ENCODE measurements at regions of chr22 and their contacts with region 1.

Region 1: GRCh38 chr22:39917776-39918495 is 17.1 kb downstream of the GRAP2 start:
- DNase-seq: no peak
- ATAC-seq: no peak
- H3K4me3 Mint-ChIP-seq: peak overlapping the region; percentile 80
- H3K27ac Mint-ChIP-seq: peak overlapping the region; percentile 92
- H3K4me1 Mint-ChIP-seq: peaks cover 79% of the 10 kb centered on the region
- H3K27me3 Mint-ChIP-seq: no peaks in the 10 kb centered on the region
- CTCF ChIP-seq: no peak

Region 2: GRCh38 chr22:39839917-39840510 is 77.9 kb before region 1 on chr22:
- CTCF ChIA-PET with region 1: no interaction called
- POLR2A ChIA-PET with region 1: no interaction called
- intact Hi-C with region 1: no loop called
- DNase-seq: peak; percentile 72
- ATAC-seq: peak; percentile 97
- H3K4me3 Mint-ChIP-seq: no peak overlapping the region
- H3K27ac Mint-ChIP-seq: peak overlapping the region; percentile 55
- H3K4me1 Mint-ChIP-seq: peaks cover 16% of the 10 kb centered on the region
- H3K27me3 Mint-ChIP-seq: no peaks in the 10 kb centered on the region
- CTCF ChIP-seq: no peak

Region 3: GRCh38 chr22:39900306-39901227 is 17.4 kb before region 1 on chr22 and contains the start of gene GRAP2:
- CTCF ChIA-PET with region 1: interaction called, 130 read pairs
- POLR2A ChIA-PET with region 1: interaction called, 270 read pairs
- intact Hi-C with region 1: no loop called
- DNase-seq: peak; percentile 83
- ATAC-seq: peak; percentile 89
- H3K4me3 Mint-ChIP-seq: peak within 1 kb of the TSS; percentile 80
- H3K27ac Mint-ChIP-seq: peak within 1 kb of the TSS; percentile 99
- H3K4me1 Mint-ChIP-seq: peaks cover 14% of the 10 kb centered on the region
- H3K27me3 Mint-ChIP-seq: no peaks in the 10 kb centered on the region
- CTCF ChIP-seq: no peak
- total RNA-seq, gene GRAP2: 83.2 to 86.8 TPM

Region 4: GRCh38 chr22:39932918-39933649 is 15.1 kb after region 1 on chr22:
- CTCF ChIA-PET with region 1: interaction called, 130 read pairs
- POLR2A ChIA-PET with region 1: interaction called, 270 read pairs
- intact Hi-C with region 1: no loop called
- DNase-seq: peak; percentile 81
- ATAC-seq: peak; percentile 67
- H3K4me3 Mint-ChIP-seq: peak overlapping the region; percentile 72
- H3K27ac Mint-ChIP-seq: peak overlapping the region; percentile 90
- H3K4me1 Mint-ChIP-seq: peaks cover 50% of the 10 kb centered on the region
- H3K27me3 Mint-ChIP-seq: no peaks in the 10 kb centered on the region
- CTCF ChIP-seq: peak; percentile 92

Region 5: GRCh38 chr22:39960791-39961746 is 43.1 kb after region 1 on chr22:
- CTCF ChIA-PET with region 1: interaction called, 3 read pairs
- POLR2A ChIA-PET with region 1: interaction called, 6 read pairs
- intact Hi-C with region 1: loop called (anchors 5 kb)
- DNase-seq: peak; percentile 94
- ATAC-seq: peak; percentile 95
- H3K4me3 Mint-ChIP-seq: peak overlapping the region; percentile 22
- H3K27ac Mint-ChIP-seq: peak overlapping the region; percentile 80
- H3K4me1 Mint-ChIP-seq: peaks cover 74% of the 10 kb centered on the region
- H3K27me3 Mint-ChIP-seq: no peaks in the 10 kb centered on the region
- CTCF ChIP-seq: no peak